Heart left ventricle (tissue), 16 donors: ENCODE measurements at regions of chr7 and their contacts with region 1.

Region 1: DNA sequence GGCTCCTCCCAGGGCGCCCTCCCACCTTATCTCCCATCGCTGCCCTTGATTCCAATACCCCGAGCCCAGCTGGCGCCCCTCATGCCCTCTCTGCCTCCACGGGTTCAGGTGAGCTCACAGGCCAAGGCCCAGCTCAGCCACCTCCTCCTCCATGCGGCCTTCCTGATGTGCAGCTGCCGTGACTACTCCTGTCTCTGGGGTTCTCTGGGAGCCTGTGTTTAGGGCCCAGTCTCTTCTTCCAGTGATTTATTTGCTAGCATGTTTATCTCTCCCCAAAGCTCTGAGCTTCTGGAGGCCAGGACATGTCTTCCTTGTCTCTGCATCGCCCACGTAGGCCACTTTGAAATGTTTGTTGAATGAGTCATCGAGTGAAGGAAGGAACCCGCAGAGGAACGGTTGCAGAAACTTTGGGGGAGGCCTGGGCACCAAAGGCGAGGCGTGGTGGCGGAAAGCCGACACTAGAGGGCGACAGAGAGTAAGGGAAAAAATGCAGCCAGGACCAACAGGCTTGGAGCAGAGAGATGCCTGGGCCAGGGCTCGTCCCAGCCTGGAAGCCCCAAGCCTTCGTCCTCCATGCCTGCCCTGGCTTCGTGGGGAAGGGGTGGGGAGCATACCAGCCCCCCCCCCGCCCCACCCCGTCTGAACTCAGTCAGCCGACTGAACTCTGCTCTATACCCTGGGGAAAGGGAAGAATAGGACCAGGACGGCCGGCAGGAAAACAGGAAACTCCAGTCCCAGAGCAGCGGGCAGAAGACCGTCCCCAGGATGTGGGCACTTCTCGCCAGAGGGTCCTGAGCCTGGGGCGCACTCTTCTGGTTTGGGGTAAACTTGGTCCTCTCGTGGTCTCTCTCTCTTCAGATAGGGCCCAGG is 10.9 kb upstream of the HSPB1 start:
- DNase-seq: peak; percentile 89 to 94 (median 90)
- ATAC-seq: peak; percentile 65 to 78 (median 76)
- H3K4me3 ChIP-seq: peak overlapping the region in 11 of 12 donors; percentile 17 to 52 (median 39)
- H3K27ac ChIP-seq: peak overlapping the region; percentile 79 to 100 (median 92)
- H3K4me1 ChIP-seq: peaks cover 6 to 56% (median 36%) of the 10 kb centered on the region in 12 donors
- H3K27me3 ChIP-seq: no peaks in the 10 kb centered on the region
- CTCF ChIP-seq: peak; percentile 96 to 98 (median 97)
- POLR2A ChIP-seq: peak in 1 of 2 donors; percentile 41

Region 2: GRCh38 chr7:76179686-76180085 is 111.9 kb before region 1 on chr7:
- intact Hi-C with region 1: loop called in 4 of 10 experiments (anchors 1 to 5 kb)
- DNase-seq: peak in 1 of 5 donors; percentile 20
- ATAC-seq: no peak
- H3K4me3 ChIP-seq: no peak overlapping the region
- H3K27ac ChIP-seq: no peak overlapping the region
- H3K4me1 ChIP-seq: peaks cover 0 to 8% (median 0%) of the 10 kb centered on the region in 12 donors
- H3K27me3 ChIP-seq: no peaks in the 10 kb centered on the region
- CTCF ChIP-seq: no peak
- POLR2A ChIP-seq: no peak

Region 3: DNA sequence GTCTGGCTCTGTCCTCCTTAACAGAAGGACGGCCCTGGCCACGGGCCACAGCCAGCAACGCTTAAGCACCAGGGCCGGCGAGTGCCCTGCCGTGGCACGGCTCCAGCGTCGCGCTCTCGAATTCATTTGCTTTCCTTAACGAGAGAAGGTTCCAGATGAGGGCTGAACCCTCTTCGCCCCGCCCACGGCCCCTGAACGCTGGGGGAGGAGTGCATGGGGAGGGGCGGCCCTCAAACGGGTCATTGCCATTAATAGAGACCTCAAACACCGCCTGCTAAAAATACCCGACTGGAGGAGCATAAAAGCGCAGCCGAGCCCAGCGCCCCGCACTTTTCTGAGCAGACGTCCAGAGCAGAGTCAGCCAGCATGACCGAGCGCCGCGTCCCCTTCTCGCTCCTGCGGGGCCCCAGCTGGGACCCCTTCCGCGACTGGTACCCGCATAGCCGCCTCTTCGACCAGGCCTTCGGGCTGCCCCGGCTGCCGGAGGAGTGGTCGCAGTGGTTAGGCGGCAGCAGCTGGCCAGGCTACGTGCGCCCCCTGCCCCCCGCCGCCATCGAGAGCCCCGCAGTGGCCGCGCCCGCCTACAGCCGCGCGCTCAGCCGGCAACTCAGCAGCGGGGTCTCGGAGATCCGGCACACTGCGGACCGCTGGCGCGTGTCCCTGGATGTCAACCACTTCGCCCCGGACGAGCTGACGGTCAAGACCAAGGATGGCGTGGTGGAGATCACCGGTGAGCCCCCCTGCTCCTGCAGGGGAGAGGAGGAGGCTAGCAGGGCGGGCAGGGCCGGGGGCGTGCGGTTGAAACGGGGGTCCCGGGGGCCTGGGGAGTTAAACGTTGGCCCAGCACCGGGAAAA is 11.0 kb after region 1 on chr7 and contains the start of gene HSPB1:
- intact Hi-C with region 1: loop called in 1 of 10 experiments (anchors 1 kb)
- DNase-seq: peak; percentile 95 to 98 (median 96)
- ATAC-seq: peak; percentile 72 to 84 (median 80)
- H3K4me3 ChIP-seq: peak within 1 kb of the TSS; percentile 82 to 100 (median 95)
- H3K27ac ChIP-seq: peak within 1 kb of the TSS; percentile 91 to 100 (median 100)
- H3K4me1 ChIP-seq: peaks cover 3 to 46% (median 35%) of the 10 kb centered on the region in 12 donors
- H3K27me3 ChIP-seq: no peaks in the 10 kb centered on the region
- CTCF ChIP-seq: peak in 1 of 12 donors; percentile 4
- POLR2A ChIP-seq: peak; percentile 99 to 100
- total RNA-seq, gene HSPB1: 822 to 5,278 (median 1,968) TPM

Region 4: DNA sequence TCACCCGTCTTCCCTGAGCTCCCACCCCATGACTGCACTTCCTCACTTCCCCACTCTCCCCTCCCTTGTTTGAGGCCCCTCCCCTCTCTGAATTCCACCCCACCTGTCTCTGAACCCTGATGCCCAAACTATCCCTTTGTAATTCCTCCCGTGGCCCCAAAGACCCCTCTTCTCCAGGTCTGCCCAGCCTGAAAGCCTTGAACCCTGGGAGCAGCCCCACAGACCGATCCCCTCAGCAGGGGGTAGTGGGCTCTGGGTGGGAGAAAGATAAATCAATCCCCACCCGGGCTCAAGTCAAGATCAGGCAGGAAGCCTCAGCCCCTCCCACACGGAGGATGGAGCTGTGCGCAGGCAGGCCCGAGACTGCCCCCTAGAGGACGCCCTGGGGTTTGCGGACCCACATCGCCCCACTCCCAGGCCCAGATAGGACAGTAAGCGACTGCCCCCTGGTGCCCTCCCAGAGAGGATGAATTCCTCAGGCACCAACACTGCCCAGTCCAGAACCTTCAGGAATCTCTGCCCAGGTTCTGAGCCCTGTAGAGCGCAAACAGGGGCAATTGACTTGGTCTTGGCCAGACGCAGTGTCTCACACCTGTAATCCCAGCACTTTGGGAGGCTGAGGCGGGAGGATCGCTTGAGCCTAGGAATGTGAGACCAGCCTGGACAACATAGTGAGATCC is 22.6 kb after region 1 on chr7:
- intact Hi-C with region 1: loop called (anchors 1 to 2 kb)
- DNase-seq: peak; percentile 96 to 98 (median 96)
- ATAC-seq: peak; percentile 48 to 75 (median 66)
- H3K4me3 ChIP-seq: no peak overlapping the region
- H3K27ac ChIP-seq: peak overlapping the region in 3 of 12 donors; percentile 43 to 47 (median 46)
- H3K4me1 ChIP-seq: peaks cover 0 to 29% (median 15%) of the 10 kb centered on the region in 12 donors
- H3K27me3 ChIP-seq: no peaks in the 10 kb centered on the region
- CTCF ChIP-seq: peak; percentile 99 to 100 (median 100)
- POLR2A ChIP-seq: peak in 1 of 2 donors; percentile 49

Region 5: GRCh38 chr7:76359111-76359978 is 67.8 kb after region 1 on chr7:
- intact Hi-C with region 1: loop called in 1 of 10 experiments (anchors 2 kb)
- DNase-seq: peak; percentile 98 to 100 (median 99)
- ATAC-seq: peak; percentile 93 to 98 (median 96)
- H3K4me3 ChIP-seq: peak overlapping the region; percentile 67 to 100 (median 98)
- H3K27ac ChIP-seq: peak overlapping the region; percentile 93 to 100 (median 99)
- H3K4me1 ChIP-seq: peaks cover 10 to 56% (median 43%) of the 10 kb centered on the region in 12 donors
- H3K27me3 ChIP-seq: no peaks in the 10 kb centered on the region
- CTCF ChIP-seq: peak; percentile 58 to 94 (median 72)
- POLR2A ChIP-seq: no peak